Aorta (tissue), 5 donors: ENCODE measurements at regions of chr1 and their contacts with region 1.

Region 1: DNA sequence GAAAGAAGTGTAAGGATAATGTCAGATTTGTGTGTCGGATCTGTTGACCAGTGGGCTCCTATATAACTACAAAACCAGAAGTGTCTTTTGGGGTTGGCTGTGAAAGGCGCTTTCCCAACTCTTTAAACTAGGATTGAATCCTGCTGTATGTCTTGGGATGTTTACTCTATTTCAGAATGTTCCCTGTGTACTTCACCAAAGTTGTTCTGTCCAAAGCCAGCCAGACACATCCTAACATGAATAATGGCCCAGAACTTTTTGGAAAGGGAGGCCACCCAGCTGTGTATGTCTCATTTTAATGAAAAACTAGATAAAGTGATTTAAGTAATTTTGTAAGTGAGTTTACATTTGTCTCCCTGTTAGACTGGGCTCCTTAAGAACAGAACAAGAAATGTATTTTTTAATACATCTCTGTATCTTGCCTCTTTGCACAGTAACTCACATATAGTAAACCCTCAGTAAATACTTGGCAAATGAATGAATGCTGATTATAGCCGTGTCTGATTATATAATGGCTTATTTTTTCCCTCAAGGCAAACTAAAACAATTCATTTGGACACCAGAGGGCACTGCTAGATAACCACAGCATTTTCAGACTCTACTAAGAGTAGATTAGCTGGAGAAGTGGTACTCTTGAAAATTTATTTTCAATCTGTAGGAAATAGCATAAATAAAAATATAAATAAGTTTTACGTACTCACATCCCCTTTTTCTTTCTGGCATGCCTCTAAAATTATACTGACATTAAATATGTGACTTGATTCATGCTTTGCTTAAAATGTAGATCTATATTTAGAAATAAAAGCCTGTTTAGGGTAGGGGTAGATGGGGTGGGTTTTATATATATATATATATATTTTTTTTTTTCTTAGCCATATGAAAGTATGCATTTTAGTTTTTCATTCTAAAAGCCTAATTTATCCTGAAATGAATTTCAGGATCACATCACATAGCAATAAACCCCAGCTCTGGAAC is 23.8 kb downstream of the TSEN15 start:
- DNase-seq: no peak
- ATAC-seq: peak; percentile 85
- H3K4me3 ChIP-seq: no peak overlapping the region
- H3K27ac ChIP-seq: no peak overlapping the region
- H3K4me1 ChIP-seq: no peaks in the 10 kb centered on the region
- H3K27me3 ChIP-seq: no peaks in the 10 kb centered on the region

Region 2: DNA sequence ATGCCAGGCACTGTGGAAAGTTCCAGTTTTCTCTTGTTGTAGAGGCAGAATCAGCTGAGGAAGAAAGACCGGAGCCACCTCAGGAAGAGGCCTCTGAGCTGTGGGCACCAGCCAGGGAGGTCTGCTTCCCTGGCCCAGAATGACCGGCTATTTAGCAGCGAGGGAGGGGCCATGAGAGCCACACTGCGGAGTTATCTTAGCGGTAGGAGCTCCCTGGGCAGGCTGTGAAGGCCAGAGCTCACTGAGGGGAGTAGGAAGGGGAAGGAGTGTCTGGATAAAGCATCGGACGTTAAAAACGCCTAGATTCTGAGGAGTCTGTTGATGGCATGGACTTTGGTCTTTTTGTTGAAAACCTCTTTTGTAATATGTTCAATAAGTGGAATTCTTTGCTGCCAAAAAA is 12.7 kb after region 1 on chr1:
- intact Hi-C with region 1: no loop called
- DNase-seq: no peak
- ATAC-seq: no peak
- H3K4me3 ChIP-seq: no peak overlapping the region
- H3K27ac ChIP-seq: no peak overlapping the region
- H3K4me1 ChIP-seq: no peaks in the 10 kb centered on the region
- H3K27me3 ChIP-seq: no peaks in the 10 kb centered on the region

Region 3: DNA sequence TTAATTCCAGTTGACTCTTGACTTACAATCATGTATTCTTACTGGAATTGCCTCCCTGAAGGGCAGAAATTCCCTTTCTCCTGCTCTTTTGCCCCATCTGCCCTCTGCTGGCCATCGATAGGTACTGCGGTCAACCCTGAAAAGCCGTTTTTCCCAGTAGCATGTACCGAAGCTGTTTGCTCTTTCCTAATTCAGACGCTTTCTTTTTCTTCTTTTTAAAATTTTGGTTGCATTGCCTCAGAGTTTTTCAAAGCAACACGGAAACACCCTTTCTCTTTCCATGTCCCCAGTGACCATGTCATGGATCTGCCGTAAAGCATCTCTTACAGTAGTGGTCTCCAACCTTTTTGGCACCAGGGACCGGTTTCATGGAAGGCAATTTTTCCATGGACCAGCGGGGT is 147.3 kb after region 1 on chr1:
- intact Hi-C with region 1: loop called (anchors 1 to 5 kb)
- DNase-seq: peak; percentile 57 to 74
- ATAC-seq: peak; percentile 80
- H3K4me3 ChIP-seq: no peak overlapping the region
- H3K27ac ChIP-seq: no peak overlapping the region
- H3K4me1 ChIP-seq: no peaks in the 10 kb centered on the region
- H3K27me3 ChIP-seq: no peaks in the 10 kb centered on the region

Region 4: DNA sequence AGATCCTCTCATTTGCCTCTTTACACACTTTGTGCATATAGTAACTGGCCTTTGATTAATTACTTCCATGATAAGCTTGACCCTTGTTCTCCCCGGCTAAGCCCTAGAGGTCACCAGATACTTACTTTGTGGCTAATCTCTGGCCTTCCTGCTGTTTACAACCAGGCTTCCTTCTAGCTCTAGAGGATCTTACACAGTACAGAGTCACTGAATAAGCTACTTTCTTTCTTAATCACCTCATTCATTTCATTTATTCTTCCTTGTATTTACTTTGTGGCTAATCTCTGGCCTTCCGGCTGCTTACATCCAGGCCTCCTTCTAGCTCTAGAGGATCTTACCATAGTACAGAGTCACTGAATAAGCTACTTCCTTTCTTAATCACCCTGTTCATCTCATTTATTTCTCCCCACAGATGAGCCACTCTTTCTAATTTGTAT is 167.2 kb after region 1 on chr1:
- intact Hi-C with region 1: no loop called
- DNase-seq: no peak
- ATAC-seq: peak; percentile 50
- H3K4me3 ChIP-seq: no peak overlapping the region
- H3K27ac ChIP-seq: no peak overlapping the region
- H3K4me1 ChIP-seq: no peaks in the 10 kb centered on the region
- H3K27me3 ChIP-seq: no peaks in the 10 kb centered on the region

Region 5: GRCh38 chr1:184563308-184563707 is 488.0 kb after region 1 on chr1:
- intact Hi-C with region 1: loop called (anchors 5 kb)
- DNase-seq: no peak
- ATAC-seq: peak; percentile 49
- H3K4me3 ChIP-seq: no peak overlapping the region
- H3K27ac ChIP-seq: no peak overlapping the region
- H3K4me1 ChIP-seq: peaks cover 0 to 11% of the 10 kb centered on the region in 2 donors
- H3K27me3 ChIP-seq: no peaks in the 10 kb centered on the region